ENCODE measurements at regions of chr1 and their contacts with region 1.

Region 1: GRCh38 chr1:155084722-155085503 is 6.3 kb downstream of the EFNA3 start:
- DNase-seq: peak; percentile 94
- H3K4me3 Mint-ChIP-seq: peak overlapping the region; percentile 95
- H3K27ac Mint-ChIP-seq: peak overlapping the region; percentile 88
- H3K4me1 Mint-ChIP-seq: peaks cover 34% of the 10 kb centered on the region
- H3K27me3 Mint-ChIP-seq: peaks cover 33% of the 10 kb centered on the region

Region 2: GRCh38 chr1:154974063-154974807 is 110.7 kb before region 1 on chr1 and contains the start of gene CKS1B:
- CTCF ChIA-PET with region 1: interaction called, 3 read pairs
- intact Hi-C with region 1: loop called (anchors 1 kb)
- DNase-seq: peak; percentile 99
- H3K4me3 Mint-ChIP-seq: no peak within 1 kb of the TSS
- H3K27ac Mint-ChIP-seq: no peak within 1 kb of the TSS
- H3K4me1 Mint-ChIP-seq: peaks cover 32% of the 10 kb centered on the region
- H3K27me3 Mint-ChIP-seq: no peaks in the 10 kb centered on the region
- total RNA-seq, gene CKS1B: 283 to 291 TPM

Region 3: DNA sequence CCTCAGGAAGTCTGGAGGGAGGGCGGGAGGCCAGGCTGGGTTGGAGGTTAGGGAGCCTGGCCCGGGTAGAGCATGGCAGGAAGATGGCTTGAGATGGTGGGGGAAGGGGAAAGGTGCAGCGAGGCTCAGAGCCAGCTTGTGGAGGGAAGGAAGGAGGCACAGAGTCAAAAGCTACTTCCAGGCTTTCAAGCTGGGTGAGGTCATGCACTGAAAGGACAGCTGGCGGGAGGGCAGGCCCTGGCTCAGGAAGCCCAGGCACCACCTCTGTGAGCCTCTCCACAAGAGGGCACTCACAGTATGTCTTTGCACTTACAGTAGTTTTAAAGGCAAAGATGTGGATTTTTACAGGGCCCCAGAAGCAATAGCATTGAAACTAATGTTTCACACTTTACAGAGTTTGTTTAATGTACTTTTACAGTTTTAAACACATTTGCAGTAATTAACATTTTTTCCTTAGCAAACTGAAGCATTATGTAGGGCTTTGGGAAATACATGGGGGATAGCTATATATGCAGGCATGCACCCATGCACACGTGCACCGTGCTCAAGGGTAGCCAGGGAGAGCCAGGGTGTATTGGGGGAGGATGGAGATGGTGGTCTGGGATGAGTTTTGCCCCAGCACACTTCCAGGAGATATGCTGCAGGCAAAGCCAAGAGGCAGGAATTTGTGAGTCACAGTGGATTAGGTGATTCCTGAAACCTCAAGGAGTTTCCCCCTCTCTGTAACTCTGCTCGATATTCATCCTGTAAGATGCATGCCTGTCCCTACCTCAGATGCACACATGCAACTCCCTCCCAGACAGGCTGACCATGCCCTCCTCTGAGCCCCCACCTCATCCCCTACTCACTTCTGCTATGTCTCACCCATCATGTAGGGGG is 39.9 kb before region 1 on chr1:
- CTCF ChIA-PET with region 1: interaction called, 20 read pairs
- intact Hi-C with region 1: loop called (anchors 1 kb)
- DNase-seq: peak; percentile 79
- H3K4me3 Mint-ChIP-seq: no peak overlapping the region
- H3K27ac Mint-ChIP-seq: no peak overlapping the region
- H3K4me1 Mint-ChIP-seq: peaks cover 19% of the 10 kb centered on the region
- H3K27me3 Mint-ChIP-seq: no peaks in the 10 kb centered on the region

Region 4: DNA sequence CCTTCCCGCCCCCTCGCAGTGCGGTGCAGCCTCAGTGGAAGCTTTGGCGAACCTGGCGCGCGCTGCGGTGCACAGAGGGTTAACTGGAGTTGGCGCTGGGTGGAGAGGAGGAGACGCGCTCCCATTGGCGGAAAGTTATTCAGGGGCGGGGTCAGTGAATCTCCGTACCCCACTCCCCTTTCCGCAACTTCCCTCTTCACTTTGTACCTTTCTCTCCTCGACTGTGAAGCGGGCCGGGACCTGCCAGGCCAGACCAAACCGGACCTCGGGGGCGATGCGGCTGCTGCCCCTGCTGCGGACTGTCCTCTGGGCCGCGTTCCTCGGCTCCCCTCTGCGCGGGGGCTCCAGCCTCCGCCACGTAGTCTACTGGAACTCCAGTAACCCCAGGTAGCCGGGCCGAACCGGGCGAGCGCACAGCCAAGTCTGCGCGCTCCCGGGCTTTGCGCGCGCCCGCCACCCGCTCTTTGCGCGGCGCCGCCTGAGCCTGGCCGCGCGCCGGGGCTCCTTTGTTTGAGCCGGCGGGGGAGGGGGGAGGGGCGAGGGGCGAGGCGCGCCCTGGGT is 21.3 kb before region 1 on chr1 and contains the start of gene EFNA4:
- CTCF ChIA-PET with region 1: interaction called, 75 read pairs
- intact Hi-C with region 1: loop called (anchors 1 kb)
- DNase-seq: peak; percentile 89
- H3K4me3 Mint-ChIP-seq: peak within 1 kb of the TSS; percentile 86
- H3K27ac Mint-ChIP-seq: no peak within 1 kb of the TSS
- H3K4me1 Mint-ChIP-seq: peaks cover 30% of the 10 kb centered on the region
- H3K27me3 Mint-ChIP-seq: no peaks in the 10 kb centered on the region
- total RNA-seq, gene EFNA4: 3.3 to 4.5 TPM

Region 5: GRCh38 chr1:155099331-155099730 is 14.4 kb after region 1 on chr1:
- CTCF ChIA-PET with region 1: interaction called, 15 read pairs
- intact Hi-C with region 1: no loop called
- DNase-seq: no peak
- H3K4me3 Mint-ChIP-seq: no peak overlapping the region
- H3K27ac Mint-ChIP-seq: no peak overlapping the region
- H3K4me1 Mint-ChIP-seq: no peaks in the 10 kb centered on the region
- H3K27me3 Mint-ChIP-seq: no peaks in the 10 kb centered on the region

Region 6: DNA sequence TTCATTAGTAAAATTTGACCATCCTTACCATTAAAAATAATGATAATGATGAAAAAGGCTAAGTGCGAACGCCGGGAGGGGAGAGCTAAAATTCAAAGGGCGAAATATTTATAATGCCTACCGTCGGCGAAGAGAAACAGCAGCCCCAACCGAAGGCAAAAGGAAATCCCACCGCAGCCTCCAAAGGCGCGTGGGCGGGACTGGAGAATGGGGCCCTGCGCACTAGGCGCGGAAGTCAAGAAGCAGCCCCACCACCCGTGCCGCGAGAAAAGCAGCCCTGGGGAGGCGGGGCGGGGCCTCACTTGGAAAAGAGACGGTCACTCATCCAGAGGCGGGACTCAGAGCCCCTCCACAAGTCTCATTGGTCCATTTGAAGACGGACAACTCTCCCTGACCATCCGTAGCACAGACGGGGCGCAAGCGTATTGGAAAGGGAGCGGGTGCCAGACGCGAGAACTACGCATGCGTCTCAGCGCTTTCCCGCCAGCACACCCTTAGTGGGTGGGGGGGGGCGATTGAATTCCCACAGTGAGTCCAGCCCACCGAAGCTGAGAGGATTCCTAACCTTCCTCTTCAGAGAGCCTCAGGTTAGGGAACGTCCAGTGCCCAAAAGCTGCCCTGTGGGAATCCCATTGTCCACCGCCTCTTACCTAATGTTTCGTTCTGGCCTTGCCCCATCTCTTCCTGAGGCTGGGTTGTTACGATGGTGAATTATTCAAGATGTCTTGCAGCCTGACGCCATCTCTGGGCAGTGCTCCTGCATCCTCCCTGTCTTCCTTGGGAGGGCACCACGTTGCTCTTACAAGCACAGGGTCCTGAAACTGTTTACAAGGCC is 142.6 kb after region 1 on chr1:
- CTCF ChIA-PET with region 1: no interaction called
- intact Hi-C with region 1: loop called (anchors 1 kb)
- DNase-seq: peak; percentile 100
- H3K4me3 Mint-ChIP-seq: peak overlapping the region; percentile 89
- H3K27ac Mint-ChIP-seq: peak overlapping the region; percentile 96
- H3K4me1 Mint-ChIP-seq: peaks cover 31% of the 10 kb centered on the region
- H3K27me3 Mint-ChIP-seq: no peaks in the 10 kb centered on the region